ENCODE measurements at regions of chr15 and their contacts with region 1.

Region 1: DNA sequence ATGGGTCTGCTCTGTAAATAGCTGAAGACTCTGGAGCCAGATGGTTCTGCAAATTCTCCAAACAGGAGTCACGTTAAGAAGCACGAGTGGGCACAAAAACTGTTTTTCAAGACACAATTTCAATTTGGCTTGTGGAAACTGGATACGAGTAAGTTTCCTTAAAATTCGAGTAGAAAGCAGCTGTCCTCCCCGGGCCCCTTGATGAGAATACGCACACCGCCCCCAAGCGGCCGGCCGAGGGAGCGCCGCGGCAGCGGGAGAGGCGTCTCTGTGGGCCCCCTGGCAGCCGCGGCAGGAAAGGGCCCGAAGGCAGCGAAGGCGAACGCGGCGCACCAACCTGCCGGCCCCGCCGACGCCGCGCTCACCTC is 778 bp upstream of the THBS1 start:
- DNase-seq: peak; percentile 91
- H3K4me3 ChIP-seq: peak overlapping the region; percentile 40
- H3K27ac ChIP-seq: no peak overlapping the region
- H3K4me1 ChIP-seq: peaks cover 7% of the 10 kb centered on the region
- H3K27me3 ChIP-seq: peaks cover 63% of the 10 kb centered on the region
- CTCF ChIP-seq: peak; percentile 92

Region 2: DNA sequence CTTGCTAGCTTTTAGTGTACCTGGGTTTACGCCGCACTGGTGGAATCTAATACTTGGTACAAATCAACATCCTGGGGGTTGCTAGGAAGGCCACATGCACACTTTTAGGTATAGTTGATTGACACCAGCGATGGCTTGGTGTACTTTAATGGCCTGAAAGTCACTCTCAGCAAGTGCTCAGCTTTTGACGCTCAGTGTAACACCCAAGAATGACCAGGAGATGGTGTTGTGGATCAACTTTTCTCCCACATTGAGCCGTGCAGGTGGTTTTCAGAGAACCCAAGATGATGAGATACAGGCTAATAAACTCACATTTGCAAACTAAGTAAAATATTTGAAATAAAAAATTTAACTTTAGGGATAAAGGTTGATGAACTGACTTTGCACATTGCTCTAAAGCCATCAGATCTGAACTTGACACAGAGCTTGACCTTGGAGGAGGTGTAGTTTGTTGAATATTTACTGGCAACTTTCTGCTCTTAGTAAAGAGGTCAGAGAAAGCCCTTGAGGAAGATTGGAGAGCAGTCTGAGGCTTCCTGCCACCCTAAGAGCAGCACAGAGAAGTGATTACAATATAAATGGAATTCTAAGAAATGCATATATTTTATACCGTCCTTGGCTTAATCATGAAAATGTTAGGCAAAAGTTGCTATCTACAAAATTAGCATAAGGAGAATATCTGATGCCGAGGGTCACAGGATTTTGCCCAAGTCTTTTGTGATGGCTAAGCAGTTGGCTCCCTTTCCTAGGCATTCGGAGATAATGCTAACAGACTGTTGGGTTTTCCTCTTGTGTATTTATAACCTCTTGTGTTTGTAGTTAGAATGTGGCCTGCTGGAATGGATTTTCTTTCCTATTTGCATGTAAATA is 872.1 kb before region 1 on chr15:
- CTCF ChIA-PET with region 1: interaction called, 4 read pairs
- POLR2A ChIA-PET with region 1: no interaction called
- intact Hi-C with region 1: loop called (anchors 5 kb)
- DNase-seq: peak; percentile 50
- H3K4me3 ChIP-seq: no peak overlapping the region
- H3K27ac ChIP-seq: no peak overlapping the region
- H3K4me1 ChIP-seq: no peaks in the 10 kb centered on the region
- H3K27me3 ChIP-seq: peaks cover 15% of the 10 kb centered on the region
- CTCF ChIP-seq: peak; percentile 70

Region 3: GRCh38 chr15:38817427-38818156 is 762.5 kb before region 1 on chr15:
- CTCF ChIA-PET with region 1: interaction called, 7 read pairs
- POLR2A ChIA-PET with region 1: no interaction called
- intact Hi-C with region 1: loop called (anchors 1 kb)
- DNase-seq: peak; percentile 49
- H3K4me3 ChIP-seq: no peak overlapping the region
- H3K27ac ChIP-seq: no peak overlapping the region
- H3K4me1 ChIP-seq: no peaks in the 10 kb centered on the region
- H3K27me3 ChIP-seq: peaks cover 10% of the 10 kb centered on the region
- CTCF ChIP-seq: peak; percentile 99

Region 4: DNA sequence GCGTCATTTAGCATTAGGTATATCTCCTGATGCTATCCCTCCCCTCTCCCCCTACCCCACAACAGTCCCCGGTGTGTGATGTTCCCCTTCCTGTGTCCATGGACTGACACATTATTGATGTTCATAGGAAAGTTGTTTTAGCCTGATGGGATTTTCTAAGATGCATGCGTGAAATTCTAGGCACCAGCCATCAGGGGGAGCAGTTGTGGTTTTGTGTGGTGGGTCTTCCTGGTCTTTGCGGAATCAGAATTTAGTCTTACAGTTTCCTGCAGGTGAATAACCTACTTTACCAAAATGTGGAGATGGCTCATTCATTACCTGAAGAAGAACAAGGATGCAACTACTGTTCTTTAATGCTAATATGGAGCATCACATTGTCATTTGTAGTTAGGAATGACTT is 454.2 kb before region 1 on chr15:
- CTCF ChIA-PET with region 1: no interaction called
- POLR2A ChIA-PET with region 1: no interaction called
- intact Hi-C with region 1: loop called (anchors 5 kb)
- DNase-seq: peak; percentile 63
- H3K4me3 ChIP-seq: no peak overlapping the region
- H3K27ac ChIP-seq: no peak overlapping the region
- H3K4me1 ChIP-seq: no peaks in the 10 kb centered on the region
- H3K27me3 ChIP-seq: peaks cover 43% of the 10 kb centered on the region
- CTCF ChIP-seq: peak; percentile 75

Region 5: DNA sequence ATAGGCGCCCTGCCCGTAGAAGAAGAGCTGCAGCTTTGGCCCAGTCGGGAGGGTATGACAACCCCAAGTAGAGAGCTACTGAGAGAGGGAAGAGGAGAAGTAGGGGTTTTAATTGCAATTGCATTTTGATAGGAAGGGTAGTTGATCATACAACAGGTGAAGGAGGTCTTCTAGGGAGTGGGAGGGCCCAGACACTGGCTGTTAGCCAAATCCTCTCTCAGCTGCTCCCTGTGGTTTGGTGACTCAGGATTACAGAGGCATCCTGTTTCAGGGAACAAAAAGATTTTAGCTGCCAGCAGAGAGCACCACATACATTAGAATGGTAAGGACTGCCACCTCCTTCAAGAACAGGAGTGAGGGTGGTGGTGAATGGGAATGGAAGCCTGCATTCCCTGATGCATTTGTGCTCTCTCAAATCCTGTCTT is 408.1 kb before region 1 on chr15:
- CTCF ChIA-PET with region 1: interaction called, 7 read pairs
- POLR2A ChIA-PET with region 1: interaction called, 5 read pairs
- intact Hi-C with region 1: loop called (anchors 2 kb)
- DNase-seq: peak; percentile 82
- H3K4me3 ChIP-seq: no peak overlapping the region
- H3K27ac ChIP-seq: no peak overlapping the region
- H3K4me1 ChIP-seq: no peaks in the 10 kb centered on the region
- H3K27me3 ChIP-seq: peaks cover 35% of the 10 kb centered on the region
- CTCF ChIP-seq: peak; percentile 41; the same call in 1 of the 2 replicates

Region 6: GRCh38 chr15:39756806-39757522 is 176.9 kb after region 1 on chr15:
- CTCF ChIA-PET with region 1: interaction called, 3 read pairs
- POLR2A ChIA-PET with region 1: no interaction called
- intact Hi-C with region 1: loop called (anchors 5 kb)
- DNase-seq: peak; percentile 72
- H3K4me3 ChIP-seq: no peak overlapping the region
- H3K27ac ChIP-seq: no peak overlapping the region
- H3K4me1 ChIP-seq: no peaks in the 10 kb centered on the region
- H3K27me3 ChIP-seq: peaks cover 5% of the 10 kb centered on the region
- CTCF ChIP-seq: peak; percentile 87